Common myeloid progenitor, CD34-positive (primary cell): ENCODE measurements at regions of chr11 and their contacts with region 1.

Region 1: GRCh38 chr11:95161248-95161647 is 69.8 kb downstream of the SESN3 start:
- DNase-seq: no peak
- H3K4me3 ChIP-seq: no peak overlapping the region
- H3K27ac ChIP-seq: no peak overlapping the region
- H3K4me1 ChIP-seq: peaks cover 10 to 31% (median 22%) of the 10 kb centered on the region in 4 experiments
- H3K27me3 ChIP-seq: no peaks in the 10 kb centered on the region

Region 2: GRCh38 chr11:95200781-95201457 is 39.7 kb after region 1 on chr11:
- CTCF ChIA-PET with region 1: no interaction called
- POLR2A ChIA-PET with region 1: interaction called, 11 read pairs
- DNase-seq: no peak
- H3K4me3 ChIP-seq: no peak overlapping the region
- H3K27ac ChIP-seq: no peak overlapping the region
- H3K4me1 ChIP-seq: peaks cover 0 to 5% (median 0%) of the 10 kb centered on the region in 4 experiments
- H3K27me3 ChIP-seq: no peaks in the 10 kb centered on the region